Cardiac septum (tissue), 1 donor: ENCODE measurements at regions of chr1 and their contacts with region 1.

Region 1: DNA sequence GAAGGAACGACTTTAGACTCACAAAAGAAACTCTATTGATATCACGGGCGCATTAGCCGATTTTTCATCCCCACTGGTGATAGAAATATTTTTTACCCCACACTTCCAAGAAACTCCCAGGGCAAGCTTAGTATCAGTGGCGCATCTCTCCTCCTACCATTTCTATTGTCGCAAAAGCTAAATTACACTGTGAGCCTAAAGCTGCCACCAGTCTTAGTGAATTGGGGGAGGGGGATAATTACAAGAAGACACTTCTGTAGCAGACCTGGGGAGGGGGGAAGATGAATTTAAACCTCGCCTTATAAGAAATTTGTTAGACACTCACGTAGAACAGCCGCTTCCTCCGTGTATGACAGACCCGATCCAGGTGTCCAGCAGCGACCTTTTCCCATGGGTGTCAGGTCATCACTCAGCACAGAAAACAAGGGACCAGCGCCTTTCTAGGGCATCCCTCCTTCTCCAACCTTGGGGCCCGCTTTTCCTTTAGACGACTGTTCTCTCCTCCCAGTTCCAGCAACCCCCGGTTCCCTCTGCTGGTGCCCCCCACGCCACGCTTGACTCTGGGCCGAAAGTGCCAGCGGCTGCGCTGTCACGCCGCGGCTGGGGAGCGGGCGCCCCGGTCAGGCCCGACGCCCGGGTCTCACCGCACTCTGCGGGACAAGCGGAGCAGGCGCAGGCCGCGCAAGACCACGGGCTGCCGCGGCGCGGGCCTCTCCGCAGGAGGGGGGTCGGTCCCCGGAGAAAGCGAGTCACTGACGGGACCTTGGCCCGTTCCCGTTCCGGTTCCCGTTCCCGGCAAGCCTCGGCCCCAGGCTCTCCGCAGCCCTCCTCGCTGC is 821 bp downstream of the PHC2 start:
- DNase-seq: no peak

Region 2: GRCh38 chr1:33384040-33384812 is 45.8 kb before region 1 on chr1:
- intact Hi-C with region 1: loop called (anchors 5 kb)
- DNase-seq: no peak

Region 3: DNA sequence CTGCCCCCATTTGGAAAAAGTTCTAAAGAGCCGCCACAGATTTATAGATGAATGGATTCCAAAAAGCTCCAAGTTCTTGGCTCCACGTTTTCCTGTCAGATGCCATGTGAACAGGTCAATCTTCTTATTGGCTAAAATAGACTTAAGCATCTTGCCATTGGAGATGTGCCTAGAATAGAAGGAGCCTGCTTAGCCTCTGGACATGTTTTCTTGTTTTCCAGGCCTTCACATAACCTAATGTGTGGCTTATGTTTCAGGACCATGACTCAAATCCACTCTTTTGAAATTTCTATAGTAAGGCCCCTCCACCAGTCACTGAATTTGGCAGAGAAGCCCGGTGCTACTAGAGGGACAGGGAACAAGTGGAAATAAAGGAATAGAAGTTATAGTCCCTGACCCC is 30.7 kb before region 1 on chr1:
- intact Hi-C with region 1: no loop called
- DNase-seq: no peak

Region 4: GRCh38 chr1:33524586-33524985 is 94.5 kb after region 1 on chr1:
- intact Hi-C with region 1: no loop called
- DNase-seq: no peak

Region 5: GRCh38 chr1:33944027-33944426 is 514.0 kb after region 1 on chr1:
- intact Hi-C with region 1: no loop called
- DNase-seq: peak; percentile 10